Left ventricle myocardium superior (tissue), 1 donor: ENCODE measurements at regions of chr16 and their contacts with region 1.

Region 1: GRCh38 chr16:46689365-46690280 is at the start of gene ORC6:
- DNase-seq: peak; percentile 99
- ATAC-seq: peak; percentile 91
- total RNA-seq, gene ORC6: 1.3 TPM

Region 2: DNA sequence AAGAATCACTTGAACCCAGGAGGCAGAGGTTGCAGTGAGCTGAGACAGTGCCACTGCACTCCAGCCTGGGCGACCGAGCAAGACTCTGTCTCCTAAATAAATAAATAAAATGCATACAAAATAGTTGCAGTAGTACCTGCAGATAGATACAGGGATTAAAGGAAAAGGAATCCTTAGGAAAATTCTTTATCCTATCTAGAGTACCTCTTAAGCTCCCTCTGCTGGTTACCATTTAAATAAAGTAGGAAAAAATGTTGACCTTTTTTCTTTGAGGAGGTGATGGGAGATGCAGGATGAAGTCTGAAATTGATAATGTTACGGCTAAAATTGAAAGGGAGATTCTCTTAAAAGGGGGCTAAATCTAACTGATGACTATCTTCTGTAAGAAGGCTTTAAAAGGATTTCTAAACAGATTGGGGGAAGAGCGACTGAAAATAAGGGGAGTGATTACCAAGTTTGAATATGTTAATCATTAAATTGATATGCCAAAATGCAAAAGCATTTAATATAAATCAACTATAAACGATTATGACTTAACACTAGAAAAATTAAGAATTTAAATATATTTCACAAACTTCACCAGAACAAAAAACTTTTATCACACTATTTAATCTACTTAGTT is 111.9 kb after region 1 on chr16:
- intact Hi-C with region 1: loop called (anchors 5 kb)
- DNase-seq: no peak
- ATAC-seq: peak; percentile 48